ENCODE measurements at regions of chr4 and their contacts with region 1.

Region 1: GRCh38 chr4:185638548-185639301 is 103.4 kb upstream of the PDLIM3 start:
- DNase-seq: no peak
- ATAC-seq: no peak

Region 2: GRCh38 chr4:186037692-186038658 is 399.2 kb after region 1 on chr4:
- intact Hi-C with region 1: loop called in 1 of 2 experiments (anchors 5 kb)
- DNase-seq: no peak
- ATAC-seq: peak; percentile 70

Measured in left colon (tissue), 2 donors.